IMR-90 (cell line): ENCODE measurements at regions of chr1 and their contacts with region 1.

Region 1: GRCh38 chr1:78839704-78840277 is 166.7 kb downstream of the ADGRL4 start:
- DNase-seq: peak; percentile 51
- ATAC-seq: peak; percentile 34; the same call in 1 of the 2 replicates
- H3K4me3 ChIP-seq: no peak overlapping the region
- H3K27ac ChIP-seq: no peak overlapping the region
- H3K4me1 ChIP-seq: peaks cover 9% of the 10 kb centered on the region
- H3K27me3 ChIP-seq: no peaks in the 10 kb centered on the region
- CTCF ChIP-seq: peak; percentile 71
- POLR2A ChIP-seq: no peak
- RAD21 ChIP-seq: peak; percentile 72

Region 2: DNA sequence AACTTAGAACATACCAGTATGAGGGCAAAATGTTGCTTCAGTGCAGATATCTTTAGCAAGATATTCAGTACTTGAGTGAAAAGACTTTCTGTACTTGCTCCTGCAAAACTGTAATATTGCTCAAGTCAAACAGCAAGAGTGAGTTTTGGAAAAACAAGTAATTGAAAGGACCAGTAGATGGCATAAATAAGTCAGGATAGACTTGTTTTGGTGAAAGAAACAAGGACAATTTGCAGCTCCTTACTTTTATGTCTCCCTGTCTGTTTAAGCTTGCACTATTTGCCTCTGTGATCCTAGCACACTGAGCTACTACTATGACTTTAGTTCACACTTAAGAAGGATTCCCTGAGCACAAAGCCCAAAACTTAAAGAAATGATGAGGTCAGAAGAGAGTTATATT is 151.1 kb before region 1 on chr1:
- CTCF ChIA-PET with region 1: no interaction called
- POLR2A ChIA-PET with region 1: no interaction called
- dilution Hi-C with region 1: no loop called
- in situ Hi-C with region 1: no loop called
- intact Hi-C with region 1: loop called (anchors 5 kb)
- DNase-seq: peak; percentile 57
- ATAC-seq: peak; percentile 70
- H3K4me3 ChIP-seq: no peak overlapping the region
- H3K27ac ChIP-seq: no peak overlapping the region
- H3K4me1 ChIP-seq: no peaks in the 10 kb centered on the region
- H3K27me3 ChIP-seq: no peaks in the 10 kb centered on the region
- CTCF ChIP-seq: peak; percentile 49
- POLR2A ChIP-seq: no peak
- RAD21 ChIP-seq: peak; percentile 54

Region 3: DNA sequence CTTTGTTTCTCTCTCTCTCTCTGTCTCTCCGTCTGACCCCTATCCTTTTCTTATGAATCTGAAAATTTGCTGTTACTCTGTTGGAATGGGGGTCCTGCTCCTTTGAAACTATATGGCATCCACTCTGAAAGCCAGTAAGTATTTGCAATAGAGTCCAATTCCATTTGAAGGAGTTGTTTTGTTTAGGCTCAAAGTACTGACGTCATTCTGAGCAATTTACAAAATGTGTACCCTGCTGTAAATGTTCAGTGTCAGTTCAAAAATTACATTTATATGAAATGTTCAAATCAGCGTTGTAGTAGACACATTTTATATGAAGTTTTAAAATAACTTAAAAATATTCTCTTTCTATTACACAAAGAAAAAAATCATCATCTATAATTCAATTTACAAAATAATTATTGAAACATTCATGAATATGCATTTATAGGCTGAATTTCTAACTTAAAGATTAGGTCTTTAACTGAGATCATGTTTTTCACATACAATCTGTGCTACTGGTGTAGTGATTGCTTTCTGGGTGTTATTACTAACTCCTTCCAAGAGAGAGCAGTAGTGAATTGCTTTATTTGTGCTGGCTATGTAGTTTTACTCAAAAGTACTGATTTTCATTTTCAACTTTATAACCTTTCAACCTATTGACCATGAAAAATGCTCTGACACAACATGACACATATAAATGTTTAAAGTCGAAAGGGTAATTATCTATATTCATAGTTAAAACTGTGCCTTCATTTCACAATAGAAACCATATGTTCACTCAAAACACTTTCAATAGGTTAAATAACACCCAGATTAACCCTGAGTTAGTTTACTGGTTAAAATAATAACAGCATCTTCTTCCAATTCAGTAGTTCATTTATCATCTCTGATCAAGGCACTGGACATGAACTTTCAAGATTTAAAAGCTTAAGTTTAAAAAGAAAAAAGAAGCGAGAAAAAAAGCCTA is 419.9 kb after region 1 on chr1:
- CTCF ChIA-PET with region 1: no interaction called
- POLR2A ChIA-PET with region 1: no interaction called
- dilution Hi-C with region 1: no loop called
- in situ Hi-C with region 1: no loop called
- intact Hi-C with region 1: loop called (anchors 2 kb)
- DNase-seq: peak; percentile 59
- ATAC-seq: peak; percentile 95
- H3K4me3 ChIP-seq: no peak overlapping the region
- H3K27ac ChIP-seq: no peak overlapping the region
- H3K4me1 ChIP-seq: no peaks in the 10 kb centered on the region
- H3K27me3 ChIP-seq: no peaks in the 10 kb centered on the region
- CTCF ChIP-seq: peak; percentile 78
- POLR2A ChIP-seq: no peak
- RAD21 ChIP-seq: peak; percentile 85

Region 4: GRCh38 chr1:79497193-79497773 is 657.5 kb after region 1 on chr1:
- CTCF ChIA-PET with region 1: interaction called, 3 read pairs
- POLR2A ChIA-PET with region 1: no interaction called
- dilution Hi-C with region 1: no loop called
- in situ Hi-C with region 1: no loop called
- intact Hi-C with region 1: loop called (anchors 2 kb)
- DNase-seq: peak; percentile 47
- ATAC-seq: peak; percentile 71; the same call in 1 of the 2 replicates
- H3K4me3 ChIP-seq: no peak overlapping the region
- H3K27ac ChIP-seq: no peak overlapping the region
- H3K4me1 ChIP-seq: no peaks in the 10 kb centered on the region
- H3K27me3 ChIP-seq: no peaks in the 10 kb centered on the region
- CTCF ChIP-seq: peak; percentile 90
- POLR2A ChIP-seq: no peak
- RAD21 ChIP-seq: peak; percentile 92

Region 5: DNA sequence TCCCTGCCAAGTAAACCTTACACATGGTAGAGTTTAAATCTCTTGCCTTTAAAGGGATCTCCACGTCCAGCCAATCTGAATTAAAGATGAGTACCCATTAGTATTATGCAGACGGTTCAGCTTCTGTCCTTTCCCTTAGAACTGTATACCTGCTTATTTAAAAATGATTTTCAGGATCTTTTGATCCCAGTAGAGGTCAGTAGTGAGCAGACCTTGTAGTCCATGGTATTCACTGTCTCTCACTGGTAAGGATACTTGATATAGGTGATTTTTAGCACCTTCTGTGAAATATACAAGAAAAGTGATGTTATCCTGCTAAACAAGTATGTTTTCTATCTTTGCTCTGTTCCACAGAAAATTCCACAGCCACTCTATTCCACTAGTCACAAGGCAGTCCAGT is 1378.3 kb after region 1 on chr1:
- CTCF ChIA-PET with region 1: no interaction called
- POLR2A ChIA-PET with region 1: no interaction called
- dilution Hi-C with region 1: no loop called
- in situ Hi-C with region 1: no loop called
- intact Hi-C with region 1: loop called (anchors 5 kb)
- DNase-seq: peak; percentile 59
- ATAC-seq: peak; percentile 85
- H3K4me3 ChIP-seq: no peak overlapping the region
- H3K27ac ChIP-seq: no peak overlapping the region
- H3K4me1 ChIP-seq: no peaks in the 10 kb centered on the region
- H3K27me3 ChIP-seq: no peaks in the 10 kb centered on the region
- CTCF ChIP-seq: peak; percentile 58
- POLR2A ChIP-seq: no peak
- RAD21 ChIP-seq: peak; percentile 57